Calu3 (cell line): ENCODE measurements at regions of chr2 and their contacts with region 1.

Region 1: DNA sequence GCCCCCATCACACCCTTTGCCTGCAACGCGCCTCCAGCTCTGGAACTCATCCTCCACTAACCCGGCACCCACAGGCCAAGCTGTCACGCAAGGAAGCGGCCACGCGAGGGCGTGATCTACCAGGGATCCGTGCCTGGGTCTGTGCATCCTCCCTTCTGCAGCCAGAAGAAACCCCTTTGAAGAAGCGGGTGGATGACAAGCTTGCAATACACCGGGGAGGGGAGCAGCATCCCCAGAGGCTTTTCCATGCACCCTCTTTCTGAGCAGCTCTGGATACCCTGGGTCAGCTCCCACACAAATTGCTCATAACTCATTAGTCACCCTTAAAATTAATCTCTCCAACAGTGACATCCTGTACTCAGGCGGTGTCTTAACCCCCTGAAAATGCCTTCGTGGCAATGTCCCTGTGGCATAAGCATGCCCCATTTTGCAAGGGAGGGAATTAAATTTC is 47.6 kb downstream of the PDCL3 start:
- DNase-seq: peak; percentile 86
- H3K4me3 Mint-ChIP-seq: no peak overlapping the region
- H3K27ac Mint-ChIP-seq: no peak overlapping the region
- H3K4me1 Mint-ChIP-seq: peaks cover 8% of the 10 kb centered on the region
- H3K27me3 Mint-ChIP-seq: peaks cover 15% of the 10 kb centered on the region
- CTCF ChIP-seq: peak; percentile 74

Region 2: DNA sequence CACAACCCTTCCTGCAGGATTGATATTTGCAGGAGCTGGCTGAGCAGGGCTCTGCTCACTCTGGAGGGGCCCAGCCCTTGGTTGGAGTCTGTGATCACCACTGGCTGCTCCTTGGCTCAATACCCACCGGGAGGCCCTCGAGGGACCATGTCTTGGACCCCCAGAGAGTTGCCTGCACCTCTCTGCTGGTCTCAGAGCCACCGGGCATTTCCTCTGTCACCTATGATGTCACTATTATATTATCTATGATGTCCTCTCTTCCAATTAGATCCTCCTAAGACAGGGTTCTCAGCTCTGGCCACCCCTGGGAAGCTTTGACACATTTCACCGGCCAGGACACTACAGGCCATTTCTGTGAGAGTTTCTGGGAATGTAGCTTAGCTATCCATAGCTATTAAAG is 65.4 kb after region 1 on chr2:
- CTCF ChIA-PET with region 1: interaction called, 10 read pairs
- intact Hi-C with region 1: no loop called
- DNase-seq: no peak
- H3K4me3 Mint-ChIP-seq: no peak overlapping the region
- H3K27ac Mint-ChIP-seq: no peak overlapping the region
- H3K4me1 Mint-ChIP-seq: no peaks in the 10 kb centered on the region
- H3K27me3 Mint-ChIP-seq: no peaks in the 10 kb centered on the region
- CTCF ChIP-seq: no peak

Region 3: GRCh38 chr2:100730346-100730745 is 119.9 kb after region 1 on chr2:
- CTCF ChIA-PET with region 1: no interaction called
- intact Hi-C with region 1: loop called (anchors 10 kb)
- DNase-seq: peak; percentile 76
- H3K4me3 Mint-ChIP-seq: no peak overlapping the region
- H3K27ac Mint-ChIP-seq: no peak overlapping the region
- H3K4me1 Mint-ChIP-seq: peaks cover 34% of the 10 kb centered on the region
- H3K27me3 Mint-ChIP-seq: no peaks in the 10 kb centered on the region
- CTCF ChIP-seq: peak; percentile 68

Region 4: GRCh38 chr2:100802066-100802465 is 191.7 kb after region 1 on chr2:
- CTCF ChIA-PET with region 1: no interaction called
- intact Hi-C with region 1: no loop called
- DNase-seq: no peak
- H3K4me3 Mint-ChIP-seq: no peak overlapping the region
- H3K27ac Mint-ChIP-seq: no peak overlapping the region
- H3K4me1 Mint-ChIP-seq: peaks cover 24% of the 10 kb centered on the region
- H3K27me3 Mint-ChIP-seq: no peaks in the 10 kb centered on the region
- CTCF ChIP-seq: no peak

Region 5: GRCh38 chr2:100826494-100826893 is 216.1 kb after region 1 on chr2:
- CTCF ChIA-PET with region 1: interaction called, 3 read pairs
- intact Hi-C with region 1: loop called (anchors 5 kb)
- DNase-seq: no peak
- H3K4me3 Mint-ChIP-seq: peak overlapping the region; percentile 24
- H3K27ac Mint-ChIP-seq: peak overlapping the region; percentile 36
- H3K4me1 Mint-ChIP-seq: peaks cover 52% of the 10 kb centered on the region
- H3K27me3 Mint-ChIP-seq: no peaks in the 10 kb centered on the region
- CTCF ChIP-seq: no peak

Region 6: DNA sequence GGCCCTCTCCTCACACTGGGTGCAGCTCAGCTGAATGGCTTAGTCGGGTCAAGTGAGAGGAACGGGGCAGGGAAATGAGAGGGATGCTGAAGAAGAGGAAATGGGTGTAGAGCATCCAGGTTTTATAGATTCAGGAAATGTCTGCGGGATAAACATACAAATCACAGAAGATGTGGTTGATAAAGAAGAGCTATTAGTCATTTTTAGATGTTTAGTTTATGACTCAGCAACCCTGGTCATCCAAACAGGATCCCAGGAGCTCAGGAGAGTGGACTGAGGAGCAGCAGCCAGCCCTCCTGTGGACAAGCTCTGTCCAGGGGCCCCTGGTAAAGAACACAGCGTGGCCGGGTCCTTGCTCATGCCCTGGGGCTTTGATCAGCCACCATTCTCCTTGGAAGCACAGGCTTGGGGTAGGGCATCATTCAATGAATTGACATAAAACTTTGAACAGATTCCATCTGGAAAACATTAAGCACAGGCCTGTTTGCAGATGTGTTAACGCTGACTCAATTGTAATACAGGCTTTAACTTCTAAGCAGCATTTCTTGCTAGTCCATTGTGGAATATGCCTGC is 292.5 kb after region 1 on chr2:
- CTCF ChIA-PET with region 1: interaction called, 10 read pairs
- intact Hi-C with region 1: no loop called
- DNase-seq: peak; percentile 56
- H3K4me3 Mint-ChIP-seq: no peak overlapping the region
- H3K27ac Mint-ChIP-seq: peak overlapping the region; percentile 63
- H3K4me1 Mint-ChIP-seq: peaks cover 42% of the 10 kb centered on the region
- H3K27me3 Mint-ChIP-seq: no peaks in the 10 kb centered on the region
- CTCF ChIP-seq: no peak

Region 7: GRCh38 chr2:100984892-100985379 is 374.5 kb after region 1 on chr2:
- CTCF ChIA-PET with region 1: interaction called, 4 read pairs
- intact Hi-C with region 1: loop called (anchors 1 kb)
- DNase-seq: peak; percentile 77
- H3K4me3 Mint-ChIP-seq: peak overlapping the region; percentile 6
- H3K27ac Mint-ChIP-seq: no peak overlapping the region
- H3K4me1 Mint-ChIP-seq: peaks cover 8% of the 10 kb centered on the region
- H3K27me3 Mint-ChIP-seq: no peaks in the 10 kb centered on the region
- CTCF ChIP-seq: peak; percentile 91